ENCODE measurements at regions of chr15 and their contacts with region 1.

Region 1: GRCh38 chr15:66700802-66701421 is 1.1 kb upstream of the SMAD6 start:
- DNase-seq: peak; percentile 97
- ATAC-seq: peak; percentile 81 to 87

Region 2: GRCh38 chr15:66221126-66221525 is 479.8 kb before region 1 on chr15:
- intact Hi-C with region 1: no loop called
- DNase-seq: no peak
- ATAC-seq: peak in 1 of 2 donors; percentile 35

Region 3: GRCh38 chr15:66619151-66619903 is 81.6 kb before region 1 on chr15:
- intact Hi-C with region 1: loop called (anchors 2 to 5 kb)
- DNase-seq: peak; percentile 83
- ATAC-seq: peak; percentile 62 to 70

Region 4: DNA sequence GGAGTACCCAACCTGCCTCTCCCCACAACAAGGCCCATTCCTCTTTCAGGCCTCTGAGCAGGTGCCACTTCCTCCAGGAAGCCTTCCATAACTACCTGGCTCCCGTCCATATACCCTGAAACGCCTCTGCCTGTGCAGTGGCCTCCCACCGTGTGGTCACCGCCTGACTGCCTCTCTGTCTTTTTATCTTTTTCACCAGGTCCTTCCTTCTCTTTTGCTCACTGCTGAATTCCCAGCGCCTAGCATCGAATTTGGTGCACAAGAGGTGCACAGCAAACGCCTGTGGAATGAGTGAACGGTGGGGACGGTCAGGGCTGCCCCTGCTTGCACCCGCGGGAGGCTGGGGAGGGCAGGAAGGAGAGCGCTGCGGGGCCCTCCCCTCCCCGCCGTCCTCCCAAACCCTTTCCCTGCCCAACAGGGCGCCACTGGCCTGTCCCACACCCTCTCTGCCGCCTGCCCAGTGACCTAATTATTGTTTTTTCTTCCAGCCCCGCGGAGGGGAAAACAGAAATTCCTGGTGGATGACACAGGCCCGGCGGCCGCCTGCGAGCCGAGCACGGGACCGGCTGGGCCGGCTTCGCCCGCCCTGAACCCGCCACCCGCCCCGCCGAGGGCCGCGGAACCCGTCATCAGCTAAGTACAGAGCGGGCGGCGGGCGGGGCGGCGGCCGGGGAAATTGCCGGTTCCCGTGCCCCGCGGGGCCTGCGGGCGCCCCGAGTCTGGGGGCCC is 141.2 kb after region 1 on chr15:
- intact Hi-C with region 1: loop called (anchors 5 to 10 kb)
- DNase-seq: peak; percentile 91
- ATAC-seq: peak; percentile 91 to 93

Region 5: DNA sequence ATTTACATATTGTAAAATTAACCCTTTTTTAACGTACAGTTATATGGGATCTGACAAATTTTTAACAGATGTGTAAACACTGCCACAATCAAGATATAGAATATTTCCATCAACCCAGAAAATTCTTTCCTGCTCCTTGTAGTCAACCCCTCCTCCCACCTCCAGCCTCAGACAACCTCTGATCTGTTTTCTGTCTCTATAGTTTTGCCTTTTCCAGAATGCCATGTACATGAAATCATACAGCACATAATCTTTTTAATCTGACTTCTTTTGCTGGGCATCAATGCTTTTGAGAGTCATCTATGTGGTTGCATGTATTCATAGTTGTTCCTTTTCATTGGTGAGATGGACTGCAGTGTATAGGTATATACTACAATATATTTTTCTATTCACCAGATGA is 154.1 kb after region 1 on chr15:
- intact Hi-C with region 1: no loop called
- DNase-seq: no peak
- ATAC-seq: no peak